ENCODE measurements at regions of chr10 and their contacts with region 1.

Region 1: DNA sequence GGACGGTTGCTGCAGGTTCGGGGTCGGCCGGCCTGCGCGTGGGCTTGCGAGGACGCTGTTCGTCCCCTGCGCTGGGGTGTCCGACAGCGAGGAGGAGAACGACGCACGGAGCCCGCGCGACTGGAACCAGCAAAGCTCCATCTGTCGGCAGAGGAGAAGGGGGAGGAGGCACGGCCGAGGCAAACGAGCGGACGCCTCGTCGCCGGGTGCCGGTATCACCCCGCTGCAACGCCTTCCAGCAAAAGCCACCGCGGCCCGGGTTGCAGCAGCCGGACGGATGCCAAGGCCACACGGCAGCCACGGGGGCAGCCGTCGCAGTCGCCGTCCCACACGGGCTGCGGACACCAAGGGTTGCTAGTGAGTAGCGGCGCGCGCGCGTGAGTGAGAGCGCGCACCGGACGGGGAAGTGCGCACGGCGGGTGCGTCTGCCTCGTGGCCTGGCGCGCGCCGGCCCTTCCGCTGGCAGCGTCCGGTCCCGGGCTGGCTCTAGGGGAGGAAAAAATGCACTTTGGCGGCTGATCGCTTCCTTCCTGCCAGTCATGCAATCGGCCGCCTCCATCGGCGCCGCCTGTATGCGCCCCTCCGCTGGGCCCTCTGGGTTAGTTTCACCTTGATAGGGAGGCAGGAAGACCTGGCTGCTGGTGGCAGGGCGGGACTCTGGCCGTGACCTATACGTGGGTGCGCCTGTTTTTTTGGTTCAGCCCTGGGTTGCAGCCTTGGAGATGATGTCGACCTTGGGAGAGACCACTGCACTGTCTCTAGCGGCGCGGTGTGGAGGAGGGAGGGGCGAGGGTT is 434 bp downstream of the STAMBPL1 start:
- DNase-seq: peak; percentile 43 to 86 (median 70)
- ATAC-seq: peak; percentile 69
- H3K4me3 ChIP-seq: peak overlapping the region; percentile 81 to 89
- H3K4me3 Mint-ChIP-seq: peak overlapping the region; percentile 98
- H3K27ac ChIP-seq: peak overlapping the region; percentile 76 to 79
- H3K27ac Mint-ChIP-seq: peak overlapping the region; percentile 96
- H3K4me1 ChIP-seq: peaks cover 37% of the 10 kb centered on the region
- H3K4me1 Mint-ChIP-seq: peaks cover 61% of the 10 kb centered on the region
- H3K27me3 ChIP-seq: no peaks in the 10 kb centered on the region
- H3K27me3 Mint-ChIP-seq: no peaks in the 10 kb centered on the region
- CTCF ChIP-seq: peak; percentile 17

Region 2: DNA sequence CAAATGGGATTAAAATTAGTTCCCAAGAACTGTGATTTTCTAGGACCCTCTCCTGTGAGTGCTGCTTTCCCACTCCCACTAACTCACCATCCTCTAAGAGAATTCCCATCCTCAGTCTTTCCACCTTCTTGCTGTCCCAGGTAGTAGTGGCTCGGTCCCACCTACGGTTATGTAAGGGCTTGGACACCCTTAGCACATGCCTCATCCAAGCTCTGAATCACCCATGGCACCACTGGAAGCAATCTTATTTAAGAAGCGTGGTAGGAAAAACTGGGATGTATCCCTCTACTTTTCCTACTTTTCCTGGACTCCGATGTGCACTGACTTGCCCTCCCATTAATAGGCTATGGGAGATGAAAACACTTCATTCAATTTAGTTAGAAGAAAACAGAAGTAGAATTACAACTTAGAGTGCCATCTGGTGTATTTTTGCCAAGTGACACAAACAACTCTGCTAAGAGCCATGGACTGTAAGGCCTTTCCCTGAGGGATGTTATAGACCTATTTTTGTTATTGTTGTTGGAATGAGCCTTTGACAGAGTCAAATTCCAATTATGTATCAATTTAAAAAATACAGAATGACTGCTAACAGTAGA is 15.1 kb before region 1 on chr10:
- CTCF ChIA-PET with region 1: interaction called, 4 read pairs
- POLR2A ChIA-PET with region 1: interaction called, 10 read pairs
- intact Hi-C with region 1: no loop called
- DNase-seq: peak in 2 of 9 experiments; percentile 13 to 35
- ATAC-seq: no peak
- H3K4me3 ChIP-seq: no peak overlapping the region
- H3K4me3 Mint-ChIP-seq: no peak overlapping the region
- H3K27ac ChIP-seq: no peak overlapping the region
- H3K27ac Mint-ChIP-seq: no peak overlapping the region
- H3K4me1 ChIP-seq: no peaks in the 10 kb centered on the region
- H3K4me1 Mint-ChIP-seq: no peaks in the 10 kb centered on the region
- H3K27me3 ChIP-seq: no peaks in the 10 kb centered on the region
- H3K27me3 Mint-ChIP-seq: no peaks in the 10 kb centered on the region
- CTCF ChIP-seq: no peak

Region 3: GRCh38 chr10:88901206-88901983 is 20.9 kb after region 1 on chr10:
- CTCF ChIA-PET with region 1: interaction called, 3 read pairs
- POLR2A ChIA-PET with region 1: interaction called, 11 read pairs
- intact Hi-C with region 1: loop called in 1 of 2 experiments (anchors 2 kb)
- DNase-seq: peak in 1 of 9 experiments; percentile 24
- ATAC-seq: peak; percentile 40
- H3K4me3 ChIP-seq: no peak overlapping the region
- H3K4me3 Mint-ChIP-seq: no peak overlapping the region
- H3K27ac ChIP-seq: peak overlapping the region in 1 of 2 experiments; percentile 1
- H3K27ac Mint-ChIP-seq: peak overlapping the region; percentile 53
- H3K4me1 ChIP-seq: peaks cover 10% of the 10 kb centered on the region
- H3K4me1 Mint-ChIP-seq: peaks cover 47% of the 10 kb centered on the region
- H3K27me3 ChIP-seq: no peaks in the 10 kb centered on the region
- H3K27me3 Mint-ChIP-seq: no peaks in the 10 kb centered on the region
- CTCF ChIP-seq: no peak

Region 4: DNA sequence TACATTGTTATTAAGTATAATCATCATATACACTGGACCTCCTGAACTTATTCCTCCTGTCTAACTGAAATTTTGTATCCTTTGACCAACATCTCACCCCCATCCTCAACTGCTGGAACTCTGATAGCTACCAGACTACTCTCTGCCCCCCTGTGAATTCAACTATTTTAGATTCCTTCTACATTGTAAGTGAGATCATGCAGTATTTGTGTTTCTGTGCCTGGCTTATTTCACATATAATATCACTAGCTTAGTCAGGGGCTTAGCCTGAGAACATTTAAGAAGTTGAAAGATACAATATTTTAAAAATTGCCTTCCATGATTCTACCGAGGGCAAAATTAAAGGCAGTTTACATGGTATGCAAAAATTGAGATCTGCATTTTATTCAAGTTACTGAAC is 26.4 kb after region 1 on chr10:
- CTCF ChIA-PET with region 1: interaction called, 7 read pairs
- POLR2A ChIA-PET with region 1: interaction called, 11 read pairs
- intact Hi-C with region 1: no loop called
- DNase-seq: no peak
- ATAC-seq: no peak
- H3K4me3 ChIP-seq: no peak overlapping the region
- H3K4me3 Mint-ChIP-seq: no peak overlapping the region
- H3K27ac ChIP-seq: no peak overlapping the region
- H3K27ac Mint-ChIP-seq: peak overlapping the region; percentile 12
- H3K4me1 ChIP-seq: no peaks in the 10 kb centered on the region
- H3K4me1 Mint-ChIP-seq: peaks cover 8% of the 10 kb centered on the region
- H3K27me3 ChIP-seq: no peaks in the 10 kb centered on the region
- H3K27me3 Mint-ChIP-seq: no peaks in the 10 kb centered on the region
- CTCF ChIP-seq: no peak

Region 5: GRCh38 chr10:89007129-89007893 is 126.8 kb after region 1 on chr10:
- CTCF ChIA-PET with region 1: no interaction called
- POLR2A ChIA-PET with region 1: no interaction called
- intact Hi-C with region 1: no loop called
- DNase-seq: no peak
- ATAC-seq: no peak
- H3K4me3 ChIP-seq: no peak overlapping the region
- H3K4me3 Mint-ChIP-seq: no peak overlapping the region
- H3K27ac ChIP-seq: no peak overlapping the region
- H3K27ac Mint-ChIP-seq: no peak overlapping the region
- H3K4me1 ChIP-seq: peaks cover 6% of the 10 kb centered on the region
- H3K4me1 Mint-ChIP-seq: peaks cover 11% of the 10 kb centered on the region
- H3K27me3 ChIP-seq: no peaks in the 10 kb centered on the region
- H3K27me3 Mint-ChIP-seq: no peaks in the 10 kb centered on the region
- CTCF ChIP-seq: no peak

Region 6: DNA sequence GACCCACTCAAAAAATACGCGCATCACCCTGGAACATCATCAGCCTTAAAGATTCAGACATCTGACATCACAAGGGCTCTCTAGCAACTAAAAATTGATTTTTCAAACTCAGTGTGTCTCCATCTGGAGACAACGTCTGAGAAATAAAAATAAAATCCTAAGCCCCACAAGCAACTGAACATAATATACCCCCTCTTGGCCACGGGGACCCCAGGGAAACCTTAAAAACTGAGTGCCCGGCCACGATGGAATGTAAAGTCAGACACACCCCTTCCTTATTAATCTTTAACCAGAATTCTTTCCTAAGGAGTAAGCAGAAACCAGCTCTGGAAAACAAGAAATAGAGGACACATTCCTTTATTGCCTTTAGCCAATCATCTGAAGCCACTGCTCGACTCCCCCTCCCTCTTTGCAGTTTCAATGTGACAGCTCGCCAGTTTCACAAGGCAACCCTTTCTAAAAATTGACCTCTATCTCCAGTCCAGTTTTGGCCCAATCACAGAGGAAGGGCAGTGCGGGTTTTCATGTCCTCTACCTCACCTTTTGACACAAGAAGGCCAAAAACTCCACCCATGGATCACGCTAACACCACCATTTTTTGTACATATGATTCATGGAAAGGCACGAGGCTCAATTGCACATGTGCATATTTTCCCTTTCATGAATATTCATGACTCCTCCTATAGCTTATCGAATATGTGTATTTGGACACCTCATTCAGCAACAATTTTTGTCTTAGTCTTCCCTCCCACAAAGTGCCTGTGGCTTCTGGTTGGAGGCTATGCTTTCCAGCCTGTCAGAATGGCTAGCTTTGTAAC is 471.5 kb after region 1 on chr10:
- CTCF ChIA-PET with region 1: no interaction called
- POLR2A ChIA-PET with region 1: no interaction called
- intact Hi-C with region 1: no loop called
- DNase-seq: no peak
- ATAC-seq: no peak
- H3K4me3 ChIP-seq: no peak overlapping the region
- H3K4me3 Mint-ChIP-seq: no peak overlapping the region
- H3K27ac ChIP-seq: no peak overlapping the region
- H3K27ac Mint-ChIP-seq: no peak overlapping the region
- H3K4me1 ChIP-seq: no peaks in the 10 kb centered on the region
- H3K4me1 Mint-ChIP-seq: no peaks in the 10 kb centered on the region
- H3K27me3 ChIP-seq: no peaks in the 10 kb centered on the region
- H3K27me3 Mint-ChIP-seq: peaks cover 14% of the 10 kb centered on the region
- CTCF ChIP-seq: no peak